Prostate gland (tissue), 2 donors: ENCODE measurements at regions of chr11 and their contacts with region 1.

Region 1: GRCh38 chr11:101583251-101584128 is at the start of gene TRPC6:
- DNase-seq: peak; percentile 39
- H3K4me3 ChIP-seq: peak within 1 kb of the TSS; percentile 40 to 51
- H3K27ac ChIP-seq: peak within 1 kb of the TSS; percentile 52 to 76
- H3K4me1 ChIP-seq: no peaks in the 10 kb centered on the region
- H3K27me3 ChIP-seq: no peaks in the 10 kb centered on the region
- CTCF ChIP-seq: no peak
- POLR2A ChIP-seq: no peak
- total RNA-seq, gene TRPC6: 1.1 to 4.1 TPM

Region 2: DNA sequence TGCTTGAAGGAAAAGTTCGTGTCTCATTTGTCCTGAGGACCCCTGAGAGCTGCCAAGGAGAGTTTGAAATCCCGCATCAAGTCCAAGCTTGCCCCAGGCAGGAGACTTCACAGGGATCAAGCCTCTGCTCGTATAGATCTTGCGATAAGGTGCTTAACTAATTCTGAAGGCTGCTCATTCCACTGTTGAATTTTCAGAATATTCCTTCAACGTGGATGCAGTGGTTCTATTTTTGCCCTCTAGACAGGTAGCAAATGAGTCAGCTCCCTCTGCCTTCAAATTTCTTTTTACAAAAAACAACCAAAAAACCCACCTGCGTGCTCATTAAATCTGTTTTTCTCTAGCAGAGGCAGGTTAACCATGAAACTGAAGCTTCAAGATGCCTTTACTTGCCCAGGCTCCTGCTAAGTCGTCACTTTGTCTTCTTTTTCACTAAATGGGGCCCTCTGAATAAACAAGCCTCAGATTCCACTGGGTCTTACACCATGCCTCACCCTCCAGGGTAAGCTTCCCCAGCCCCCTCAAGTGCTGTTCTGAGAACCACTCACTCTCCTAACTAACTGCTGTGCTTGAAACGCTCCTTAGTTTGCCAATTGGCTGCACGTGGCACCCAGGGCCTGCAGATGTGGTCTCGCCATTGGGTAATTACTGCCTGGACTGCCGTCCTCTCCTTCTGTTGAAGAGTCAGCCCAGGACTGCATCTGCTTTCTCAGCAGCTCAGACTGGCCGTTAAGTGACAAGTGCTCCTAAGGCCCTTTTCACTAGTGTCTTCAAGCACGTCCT is 104.7 kb before region 1 on chr11:
- intact Hi-C with region 1: loop called (anchors 5 kb)
- DNase-seq: peak; percentile 71
- H3K4me3 ChIP-seq: no peak overlapping the region
- H3K27ac ChIP-seq: no peak overlapping the region
- H3K4me1 ChIP-seq: no peaks in the 10 kb centered on the region
- H3K27me3 ChIP-seq: no peaks in the 10 kb centered on the region
- CTCF ChIP-seq: no peak
- POLR2A ChIP-seq: no peak